ENCODE measurements at regions of chr9 and their contacts with region 1.

Region 1: DNA sequence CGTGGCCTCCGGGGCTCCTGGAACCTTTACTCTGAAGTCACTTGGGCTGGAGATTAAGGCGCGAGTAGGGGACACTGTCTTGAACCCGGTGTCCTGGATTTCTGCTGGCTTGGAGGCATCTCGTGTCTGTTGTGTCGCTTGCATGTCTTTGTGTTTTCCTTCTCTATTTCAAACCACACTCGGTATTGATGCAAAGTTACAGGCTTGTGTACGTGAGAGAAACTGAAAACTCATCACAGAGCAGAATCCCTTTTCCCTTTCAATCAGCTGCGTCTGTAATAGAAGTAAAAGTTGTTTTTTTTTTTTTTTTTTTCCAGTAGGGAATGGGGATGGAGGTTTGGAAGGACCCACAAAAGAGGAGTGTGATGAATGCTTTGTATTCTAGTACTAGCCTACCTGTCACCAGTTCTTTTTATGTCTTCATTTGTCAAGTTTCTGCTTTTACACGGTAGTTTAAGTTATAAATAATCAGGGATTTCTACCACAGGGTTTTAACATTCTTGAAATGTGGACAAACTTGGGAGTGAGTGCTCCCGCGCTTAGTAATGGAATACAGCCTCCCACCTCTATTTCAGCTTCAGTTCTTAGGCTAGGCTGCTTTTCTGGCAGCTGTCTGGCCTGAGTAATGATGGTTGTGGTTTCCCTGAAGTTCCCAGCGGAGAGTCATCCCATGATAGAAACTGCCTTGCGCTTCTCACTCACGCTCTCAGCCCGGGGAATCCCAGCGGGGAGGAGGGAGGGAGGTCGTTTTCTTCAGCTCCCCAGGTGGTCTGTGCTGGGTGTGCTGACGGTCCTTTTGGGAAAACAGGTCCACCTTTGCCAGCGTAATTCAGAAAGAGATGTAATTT is 763 bp downstream of the TJP2 start:
- DNase-seq: peak; percentile 61 to 75
- ATAC-seq: peak; percentile 82 to 90 (median 88)
- H3K4me3 ChIP-seq: peak overlapping the region; percentile 93
- H3K27ac ChIP-seq: peak overlapping the region; percentile 95
- H3K4me1 ChIP-seq: peaks cover 18% of the 10 kb centered on the region
- H3K27me3 ChIP-seq: no peaks in the 10 kb centered on the region
- CTCF ChIP-seq: no peak

Region 2: GRCh38 chr9:69136779-69137178 is 38.1 kb before region 1 on chr9:
- intact Hi-C with region 1: loop called in 1 of 2 experiments (anchors 5 kb)
- DNase-seq: no peak
- ATAC-seq: peak; percentile 21 to 62 (median 54)
- H3K4me3 ChIP-seq: no peak overlapping the region
- H3K27ac ChIP-seq: no peak overlapping the region
- H3K4me1 ChIP-seq: no peaks in the 10 kb centered on the region
- H3K27me3 ChIP-seq: no peaks in the 10 kb centered on the region
- CTCF ChIP-seq: no peak

Region 3: DNA sequence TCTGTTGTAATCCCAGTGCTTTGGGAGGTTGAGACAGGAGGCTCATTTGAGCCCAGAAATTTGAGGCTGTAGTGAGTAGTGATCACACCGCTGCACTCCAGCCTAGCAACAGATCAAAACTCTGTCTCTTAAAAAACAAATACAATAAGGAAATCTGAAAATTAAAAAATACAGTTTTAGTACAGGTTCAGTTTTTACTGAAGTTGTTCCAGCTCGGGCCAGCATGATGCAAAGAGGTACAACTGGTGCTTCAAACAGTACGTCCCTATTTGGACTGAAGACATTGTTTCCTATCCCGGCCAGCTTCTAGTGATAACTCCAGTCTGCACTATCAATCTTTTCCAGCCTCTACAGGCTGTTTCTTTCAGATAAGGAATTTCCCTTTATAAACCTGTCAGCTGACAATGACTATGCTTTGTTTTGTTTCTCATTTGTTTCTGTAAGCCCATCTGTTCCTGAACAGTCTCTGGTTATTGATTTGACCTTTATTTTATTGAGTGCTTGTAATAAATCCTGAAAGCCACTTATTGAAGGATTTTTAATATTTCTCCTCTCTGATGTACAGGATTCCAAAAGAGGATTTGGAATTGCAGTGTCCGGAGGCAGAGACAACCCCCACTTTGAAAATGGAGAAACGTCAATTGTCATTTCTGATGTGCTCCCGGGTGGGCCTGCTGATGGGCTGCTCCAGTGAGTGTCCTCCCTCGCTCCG is 41.1 kb after region 1 on chr9:
- intact Hi-C with region 1: no loop called
- DNase-seq: no peak
- ATAC-seq: no peak
- H3K4me3 ChIP-seq: no peak overlapping the region
- H3K27ac ChIP-seq: no peak overlapping the region
- H3K4me1 ChIP-seq: peaks cover 11% of the 10 kb centered on the region
- H3K27me3 ChIP-seq: no peaks in the 10 kb centered on the region
- CTCF ChIP-seq: no peak

Measured in psoas muscle (tissue), 8 donors.